ENCODE measurements at regions of chr5 and their contacts with region 1.

Region 1: GRCh38 chr5:170183816-170184687 is 48.7 kb upstream of the C5orf58 start:
- DNase-seq: peak; percentile 44
- H3K4me3 ChIP-seq: no peak overlapping the region
- H3K27ac ChIP-seq: no peak overlapping the region
- H3K4me1 ChIP-seq: no peaks in the 10 kb centered on the region
- H3K27me3 ChIP-seq: no peaks in the 10 kb centered on the region
- CTCF ChIP-seq: peak; percentile 27 to 60 (median 55)
- EP300 ChIP-seq: no peak
- POLR2A ChIP-seq: no peak

Region 2: GRCh38 chr5:170100066-170100943 is 83.7 kb before region 1 on chr5:
- in situ Hi-C with region 1: loop called in 2 of 4 experiments (anchors 10 kb)
- intact Hi-C with region 1: no loop called
- DNase-seq: peak; percentile 67
- H3K4me3 ChIP-seq: no peak overlapping the region
- H3K27ac ChIP-seq: no peak overlapping the region
- H3K4me1 ChIP-seq: no peaks in the 10 kb centered on the region
- H3K27me3 ChIP-seq: no peaks in the 10 kb centered on the region
- CTCF ChIP-seq: peak; percentile 41 to 56 (median 49)
- EP300 ChIP-seq: no peak
- POLR2A ChIP-seq: no peak

Measured in transverse colon (tissue), 4 donors.